Aorta (tissue), 5 donors: ENCODE measurements at regions of chr16 and their contacts with region 1.

Region 1: DNA sequence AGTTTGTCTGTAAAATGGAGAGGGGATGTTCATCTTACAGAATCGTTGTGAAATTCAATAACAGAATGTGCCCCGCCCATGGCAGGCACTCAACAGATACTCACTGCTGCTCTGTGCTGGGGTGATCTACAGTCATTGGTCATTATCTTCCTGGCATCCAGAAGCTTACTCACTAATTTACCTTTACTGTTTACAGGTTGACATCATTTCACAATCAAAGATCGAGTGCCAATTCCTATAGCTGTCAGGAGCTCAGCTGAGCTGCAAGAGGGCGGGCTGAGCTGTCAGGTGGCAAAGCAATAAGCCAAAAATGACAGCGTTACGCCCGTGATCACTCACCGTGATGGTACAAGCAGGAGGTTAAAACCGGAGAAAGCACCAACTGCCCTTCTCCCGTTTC is 51.2 kb downstream of the LITAF start:
- DNase-seq: no peak
- ATAC-seq: no peak
- H3K4me3 ChIP-seq: no peak overlapping the region
- H3K27ac ChIP-seq: no peak overlapping the region
- H3K4me1 ChIP-seq: no peaks in the 10 kb centered on the region
- H3K27me3 ChIP-seq: no peaks in the 10 kb centered on the region

Region 2: DNA sequence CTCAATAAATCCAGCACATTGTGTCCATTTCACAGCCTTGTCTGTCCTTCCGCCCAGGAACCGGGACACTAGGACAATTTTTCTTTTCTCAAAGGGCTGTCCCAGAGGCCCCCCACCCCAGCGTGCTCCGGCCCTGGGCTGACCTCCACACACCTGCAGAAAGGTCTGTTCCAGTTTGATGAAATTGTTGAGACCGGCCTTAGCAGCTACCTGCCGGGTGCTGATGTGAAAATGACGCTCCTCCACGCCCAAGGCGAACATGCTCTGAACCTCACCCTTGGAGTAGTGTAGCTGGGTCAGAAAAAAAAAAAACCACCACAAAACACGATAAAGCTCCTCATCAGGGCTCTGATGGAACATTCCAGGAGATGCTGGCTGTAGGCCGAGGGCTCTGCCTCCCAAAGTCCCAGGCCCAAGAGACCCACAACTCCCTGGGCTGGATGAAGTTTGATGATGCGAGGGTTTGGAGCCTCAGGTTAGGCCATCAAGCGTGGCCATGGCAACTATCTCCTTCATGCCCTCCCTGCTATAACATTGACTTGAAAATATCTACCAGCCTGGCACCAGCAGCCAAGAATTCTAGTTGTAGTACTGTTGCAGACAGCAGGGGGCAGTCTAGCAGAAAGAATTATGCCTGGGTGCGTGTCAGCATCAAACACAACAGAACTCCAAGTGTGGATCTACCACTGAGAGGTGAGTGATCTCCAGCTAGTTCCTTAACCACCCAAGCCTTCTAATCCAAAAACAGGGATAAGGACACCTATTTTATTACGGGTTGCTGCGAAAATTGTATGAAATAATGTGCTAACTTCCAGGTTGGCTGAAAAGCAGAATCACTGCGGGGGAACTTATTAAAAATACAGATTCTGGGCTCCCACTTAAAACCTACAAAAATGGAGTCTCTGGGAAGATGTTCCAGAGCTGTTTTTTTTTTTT is 128.2 kb before region 1 on chr16:
- intact Hi-C with region 1: loop called (anchors 5 kb)
- DNase-seq: peak in 1 of 2 donors; percentile 69
- ATAC-seq: peak; percentile 77
- H3K4me3 ChIP-seq: no peak overlapping the region
- H3K27ac ChIP-seq: no peak overlapping the region
- H3K4me1 ChIP-seq: no peaks in the 10 kb centered on the region
- H3K27me3 ChIP-seq: no peaks in the 10 kb centered on the region

Region 3: DNA sequence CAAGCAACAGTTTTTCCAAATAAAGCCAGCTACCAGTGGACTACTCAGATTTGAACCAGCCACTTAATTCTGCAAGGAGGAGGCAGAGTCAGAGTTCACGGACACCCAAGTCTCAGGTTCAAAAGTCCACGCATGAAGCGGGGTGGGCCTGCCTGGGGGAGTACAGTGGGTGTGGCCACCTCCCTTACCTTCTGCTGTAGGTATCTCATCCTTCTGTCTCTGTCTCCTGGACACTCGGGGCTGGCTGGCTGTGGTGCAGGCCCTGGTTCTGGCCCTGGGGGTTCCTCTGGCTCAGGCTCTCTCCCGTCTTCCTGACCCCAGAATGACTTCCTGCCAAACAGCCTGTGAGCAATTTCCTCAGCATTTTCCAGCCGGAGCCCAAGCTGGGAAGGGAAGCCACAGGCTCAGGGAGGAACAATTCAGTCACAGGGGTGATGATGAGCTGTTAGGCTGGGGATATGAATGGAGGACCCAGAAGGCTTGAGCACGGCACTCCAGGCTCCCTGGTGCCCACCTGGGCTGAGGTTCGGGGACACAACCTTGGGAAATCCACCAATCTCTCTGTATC is 50.7 kb before region 1 on chr16:
- intact Hi-C with region 1: no loop called
- DNase-seq: peak; percentile 43 to 52
- ATAC-seq: no peak
- H3K4me3 ChIP-seq: no peak overlapping the region
- H3K27ac ChIP-seq: no peak overlapping the region
- H3K4me1 ChIP-seq: no peaks in the 10 kb centered on the region
- H3K27me3 ChIP-seq: no peaks in the 10 kb centered on the region

Region 4: GRCh38 chr16:11572301-11572995 is 37.0 kb after region 1 on chr16:
- intact Hi-C with region 1: no loop called
- DNase-seq: peak in 1 of 2 donors; percentile 61
- ATAC-seq: no peak
- H3K4me3 ChIP-seq: no peak overlapping the region
- H3K27ac ChIP-seq: no peak overlapping the region
- H3K4me1 ChIP-seq: no peaks in the 10 kb centered on the region
- H3K27me3 ChIP-seq: no peaks in the 10 kb centered on the region

Region 5: GRCh38 chr16:11586856-11587642 is 51.6 kb after region 1 on chr16 and contains the start of gene LITAF:
- intact Hi-C with region 1: loop called in 1 of 2 experiments (anchors 10 kb)
- DNase-seq: peak; percentile 79 to 92
- ATAC-seq: peak; percentile 84
- H3K4me3 ChIP-seq: peak within 1 kb of the TSS; percentile 95 to 97
- H3K27ac ChIP-seq: peak within 1 kb of the TSS; percentile 95 to 97
- H3K4me1 ChIP-seq: peaks cover 0 to 10% of the 10 kb centered on the region in 2 donors
- H3K27me3 ChIP-seq: no peaks in the 10 kb centered on the region
- total RNA-seq, gene LITAF: 145 to 157 TPM

Region 6: DNA sequence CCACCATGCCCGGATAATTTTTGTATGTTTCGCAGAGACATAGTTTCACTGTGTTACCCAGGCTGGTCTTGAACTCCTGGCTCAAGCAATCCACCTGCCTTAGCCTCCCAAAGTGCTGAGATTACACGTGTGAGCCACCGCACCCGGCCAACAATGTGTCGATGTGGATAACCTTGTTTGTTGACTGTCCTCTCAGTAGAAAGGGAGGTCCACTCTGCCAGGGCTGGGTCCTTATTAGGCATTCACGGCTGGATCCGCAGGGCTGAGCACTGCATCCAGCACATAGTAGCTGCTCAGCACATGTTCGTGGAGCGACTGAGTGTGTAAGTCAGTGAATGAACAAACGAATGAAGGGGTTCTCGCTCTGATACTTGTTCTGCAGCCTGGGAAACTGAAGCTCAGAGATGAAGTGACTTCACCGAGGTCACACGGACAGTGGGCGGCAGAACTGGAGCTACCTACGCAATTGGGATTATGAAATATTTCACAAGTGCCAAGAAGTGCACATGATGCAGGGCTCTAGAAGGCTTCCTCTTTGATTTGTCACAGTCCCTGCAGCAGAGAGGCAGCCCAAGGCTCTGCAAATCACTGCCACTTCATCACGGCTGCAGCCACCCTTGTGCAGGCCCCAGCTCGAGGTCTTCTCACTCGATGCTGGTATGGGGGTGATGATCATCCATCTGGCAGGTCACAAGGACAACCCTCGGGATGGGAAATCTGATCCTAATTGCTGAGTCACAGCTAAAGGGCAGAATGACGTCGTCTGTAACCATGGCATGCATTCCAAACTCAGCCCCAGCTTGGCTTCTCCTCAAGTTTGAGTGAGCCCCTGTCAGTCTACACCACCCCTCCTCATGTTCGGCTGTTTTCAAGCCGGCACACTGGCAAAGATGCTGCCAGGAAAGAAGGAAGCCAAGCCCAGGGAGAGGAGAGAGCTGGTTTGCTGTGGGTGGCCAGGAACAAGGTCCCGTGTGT is 104.7 kb after region 1 on chr16:
- intact Hi-C with region 1: loop called (anchors 2 to 5 kb)
- DNase-seq: peak; percentile 86 to 90
- ATAC-seq: peak; percentile 92
- H3K4me3 ChIP-seq: no peak overlapping the region
- H3K27ac ChIP-seq: peak overlapping the region; percentile 46 to 71
- H3K4me1 ChIP-seq: no peaks in the 10 kb centered on the region
- H3K27me3 ChIP-seq: no peaks in the 10 kb centered on the region

Region 7: GRCh38 chr16:11715246-11715947 is 179.9 kb after region 1 on chr16:
- intact Hi-C with region 1: loop called in 1 of 2 experiments (anchors 5 kb)
- DNase-seq: no peak
- ATAC-seq: no peak
- H3K4me3 ChIP-seq: no peak overlapping the region
- H3K27ac ChIP-seq: no peak overlapping the region
- H3K4me1 ChIP-seq: no peaks in the 10 kb centered on the region
- H3K27me3 ChIP-seq: no peaks in the 10 kb centered on the region

Region 8: GRCh38 chr16:11819798-11820197 is 284.3 kb after region 1 on chr16:
- intact Hi-C with region 1: loop called in 1 of 2 experiments (anchors 10 kb)
- DNase-seq: no peak
- ATAC-seq: no peak
- H3K4me3 ChIP-seq: no peak overlapping the region
- H3K27ac ChIP-seq: no peak overlapping the region
- H3K4me1 ChIP-seq: no peaks in the 10 kb centered on the region
- H3K27me3 ChIP-seq: no peaks in the 10 kb centered on the region

Region 9: GRCh38 chr16:12573730-12574383 is 1038.4 kb after region 1 on chr16:
- intact Hi-C with region 1: no loop called
- DNase-seq: peak in 1 of 2 donors; percentile 72
- ATAC-seq: no peak
- H3K4me3 ChIP-seq: no peak overlapping the region
- H3K27ac ChIP-seq: no peak overlapping the region
- H3K4me1 ChIP-seq: no peaks in the 10 kb centered on the region
- H3K27me3 ChIP-seq: no peaks in the 10 kb centered on the region